Heart right ventricle (tissue), 16 donors: ENCODE measurements at regions of chr17 and their contacts with region 1.

Region 1: GRCh38 chr17:42517516-42517915 is 18.5 kb upstream of the NAGLU start:
- DNase-seq: peak; percentile 89 to 90
- ATAC-seq: peak; percentile 29 to 59 (median 50)
- H3K4me3 ChIP-seq: no peak overlapping the region
- H3K27ac ChIP-seq: peak overlapping the region; percentile 92 to 98 (median 95)
- H3K4me1 ChIP-seq: peaks cover 62 to 93% (median 73%) of the 10 kb centered on the region in 9 donors
- H3K27me3 ChIP-seq: no peaks in the 10 kb centered on the region
- CTCF ChIP-seq: peak; percentile 84 to 96 (median 94)

Region 2: DNA sequence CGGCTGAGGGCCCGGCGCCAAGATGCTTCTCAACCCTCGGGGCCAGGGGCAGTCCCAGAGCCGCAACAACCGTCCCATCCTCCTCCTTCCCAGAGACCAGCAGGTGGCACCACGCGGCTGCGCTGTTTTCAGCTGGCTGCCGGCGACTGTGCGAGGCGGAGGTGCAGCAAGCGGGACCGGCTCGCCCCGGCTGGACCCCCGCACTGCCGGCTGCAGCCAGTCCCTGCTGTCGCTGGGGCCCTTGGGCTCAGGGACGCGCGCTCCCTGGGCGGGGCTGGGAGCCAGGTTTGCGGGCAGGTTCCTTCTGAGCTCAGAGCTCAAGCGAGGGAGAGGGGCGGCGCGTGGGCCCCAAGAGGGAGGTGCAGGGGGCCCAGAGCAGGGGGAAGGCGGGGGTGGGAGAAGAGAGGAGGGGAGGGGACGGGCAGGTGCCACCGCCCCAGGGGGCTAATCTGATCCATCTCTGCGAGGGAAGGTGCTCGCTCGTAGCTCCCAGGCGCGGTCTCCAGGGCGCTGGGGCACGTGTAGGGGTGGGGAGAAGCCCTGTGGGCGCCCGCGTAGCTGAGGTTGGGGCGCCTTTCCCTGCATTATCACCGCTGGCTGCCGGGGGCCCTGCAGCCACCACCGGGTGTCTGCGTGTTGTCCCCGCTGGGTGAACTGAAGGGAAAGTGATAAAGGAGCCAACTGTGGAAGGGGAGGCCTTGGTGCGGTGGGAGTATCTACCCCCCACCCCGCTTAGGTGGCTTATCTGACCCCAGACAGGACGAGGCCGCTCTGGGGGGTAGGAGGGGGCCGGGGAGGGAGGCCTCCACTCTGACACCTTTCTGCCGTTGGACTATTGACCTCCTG is 205.0 kb before region 1 on chr17:
- intact Hi-C with region 1: loop called in 2 of 10 experiments (anchors 5 to 10 kb)
- DNase-seq: peak; percentile 86 to 89
- ATAC-seq: peak; percentile 72 to 90 (median 84)
- H3K4me3 ChIP-seq: peak overlapping the region in 7 of 10 donors; percentile 10 to 34 (median 25)
- H3K27ac ChIP-seq: peak overlapping the region; percentile 24 to 86 (median 77)
- H3K4me1 ChIP-seq: peaks cover 10 to 73% (median 35%) of the 10 kb centered on the region in 9 donors
- H3K27me3 ChIP-seq: no peaks in the 10 kb centered on the region
- CTCF ChIP-seq: peak; percentile 34 to 81 (median 66)

Region 3: GRCh38 chr17:42329025-42329976 is 188.2 kb before region 1 on chr17:
- intact Hi-C with region 1: loop called in 4 of 10 experiments (anchors 5 kb)
- DNase-seq: no peak
- ATAC-seq: peak in 7 of 8 donors; percentile 45 to 77 (median 70)
- H3K4me3 ChIP-seq: no peak overlapping the region
- H3K27ac ChIP-seq: peak overlapping the region in 9 of 10 donors; percentile 10 to 72 (median 43)
- H3K4me1 ChIP-seq: peaks cover 0 to 22% (median 18%) of the 10 kb centered on the region in 9 donors
- H3K27me3 ChIP-seq: no peaks in the 10 kb centered on the region
- CTCF ChIP-seq: no peak

Region 4: GRCh38 chr17:42361781-42362186 is 155.7 kb before region 1 on chr17:
- intact Hi-C with region 1: no loop called
- DNase-seq: no peak
- ATAC-seq: peak in 6 of 8 donors; percentile 20 to 79 (median 40)
- H3K4me3 ChIP-seq: no peak overlapping the region
- H3K27ac ChIP-seq: peak overlapping the region in 6 of 10 donors; percentile 29 to 57 (median 42)
- H3K4me1 ChIP-seq: peaks cover 8 to 98% (median 88%) of the 10 kb centered on the region in 9 donors
- H3K27me3 ChIP-seq: no peaks in the 10 kb centered on the region
- CTCF ChIP-seq: no peak

Region 5: GRCh38 chr17:42422958-42423712 is 94.4 kb before region 1 on chr17 and contains the start of gene CAVIN1:
- intact Hi-C with region 1: loop called in 8 of 10 experiments (anchors 5 to 10 kb)
- DNase-seq: peak; percentile 100
- ATAC-seq: peak; percentile 91 to 96 (median 92)
- H3K4me3 ChIP-seq: peak within 1 kb of the TSS; percentile 79 to 100 (median 96)
- H3K27ac ChIP-seq: peak within 1 kb of the TSS; percentile 95 to 100 (median 99)
- H3K4me1 ChIP-seq: peaks cover 6 to 64% (median 39%) of the 10 kb centered on the region in 9 donors
- H3K27me3 ChIP-seq: peaks cover 0 to 54% (median 0%) of the 10 kb centered on the region in 7 donors
- CTCF ChIP-seq: peak in 2 of 9 donors; percentile 19 to 21
- total RNA-seq, gene CAVIN1: 176 to 300 (median 241) TPM

Region 6: DNA sequence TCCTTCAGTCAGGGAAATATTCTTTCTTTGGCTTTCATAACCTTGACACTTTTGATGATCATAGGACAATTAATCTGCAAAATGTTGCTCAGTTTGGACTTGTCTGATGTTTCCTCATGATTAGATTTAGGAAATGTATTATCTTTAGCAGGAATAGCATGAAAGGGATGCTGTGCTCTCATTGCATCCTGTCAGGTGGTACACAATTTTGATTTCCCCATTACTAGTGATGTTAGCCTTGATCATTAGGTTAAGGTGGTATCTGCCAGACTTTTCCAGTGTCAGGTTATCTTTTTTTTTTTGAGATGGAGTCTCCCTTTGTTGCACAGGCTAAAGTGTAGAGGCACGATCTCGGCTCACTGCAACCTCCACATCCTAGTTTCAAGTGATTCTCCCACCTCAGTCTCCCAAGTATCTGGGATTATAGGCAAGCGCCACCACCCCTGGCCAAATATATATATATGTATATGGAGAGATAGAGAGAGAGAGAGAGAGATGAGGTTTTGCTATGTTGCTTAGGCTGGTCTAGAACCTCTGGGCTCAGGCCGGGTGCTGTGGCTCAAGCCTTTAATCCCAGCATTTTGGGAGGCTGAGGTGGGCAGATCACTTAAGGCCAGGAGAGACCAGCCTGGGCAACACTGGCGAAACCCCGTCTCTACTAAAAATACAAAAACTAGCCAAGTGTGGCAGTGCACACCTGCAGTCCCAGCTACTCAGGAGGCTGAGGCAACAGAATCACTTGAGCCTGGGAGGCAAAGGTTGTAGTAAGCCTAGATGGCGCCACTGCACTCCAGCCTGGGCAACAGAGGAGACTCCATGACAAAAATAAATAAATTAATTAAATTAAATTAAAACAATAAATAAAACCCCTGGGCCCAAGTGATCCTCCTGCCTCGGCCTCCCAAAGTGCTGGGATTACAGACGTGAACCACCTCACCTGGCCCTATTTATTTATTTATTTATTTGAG is 78.6 kb before region 1 on chr17:
- intact Hi-C with region 1: loop called in 2 of 10 experiments (anchors 5 to 10 kb)
- DNase-seq: no peak
- ATAC-seq: no peak
- H3K4me3 ChIP-seq: no peak overlapping the region
- H3K27ac ChIP-seq: peak overlapping the region in 1 of 10 donors; percentile 6
- H3K4me1 ChIP-seq: peaks cover 0 to 40% (median 25%) of the 10 kb centered on the region in 9 donors
- H3K27me3 ChIP-seq: no peaks in the 10 kb centered on the region
- CTCF ChIP-seq: peak in 7 of 9 donors; percentile 18 to 59 (median 45)

Region 7: DNA sequence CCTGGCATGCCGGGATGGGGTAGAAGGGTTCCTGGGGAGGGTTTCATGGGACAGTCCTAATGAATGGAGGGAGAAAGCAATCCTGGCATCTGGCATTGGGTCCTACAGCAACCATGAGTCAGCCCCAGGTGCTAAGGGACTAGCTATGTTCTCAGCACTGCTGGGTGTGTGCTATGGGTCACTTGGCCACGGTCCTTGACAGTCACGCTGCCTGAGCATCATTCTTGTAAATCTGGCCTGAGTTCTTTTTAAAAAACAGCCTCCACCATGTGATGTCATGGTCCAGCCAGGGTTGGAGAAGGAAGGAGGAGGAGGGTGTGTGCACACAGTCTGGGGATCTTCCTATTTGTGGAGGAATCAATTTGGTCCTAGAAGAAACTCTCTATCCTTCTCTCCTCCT is 237.3 kb after region 1 on chr17:
- intact Hi-C with region 1: no loop called
- DNase-seq: peak; percentile 26 to 45
- ATAC-seq: peak in 7 of 8 donors; percentile 55 to 90 (median 73)
- H3K4me3 ChIP-seq: no peak overlapping the region
- H3K27ac ChIP-seq: peak overlapping the region in 3 of 10 donors; percentile 17 to 47 (median 43)
- H3K4me1 ChIP-seq: peaks cover 0 to 32% (median 18%) of the 10 kb centered on the region in 9 donors
- H3K27me3 ChIP-seq: peaks cover 0 to 3% (median 0%) of the 10 kb centered on the region in 7 donors
- CTCF ChIP-seq: no peak